ENCODE measurements at regions of chr18 and their contacts with region 1.

Region 1: GRCh38 chr18:58043491-58044379 is at the start of gene NEDD4L:
- DNase-seq: peak; percentile 83
- H3K4me3 Mint-ChIP-seq: peak within 1 kb of the TSS; percentile 88
- H3K27ac Mint-ChIP-seq: peak within 1 kb of the TSS; percentile 80
- H3K4me1 Mint-ChIP-seq: peaks cover 19% of the 10 kb centered on the region
- H3K27me3 Mint-ChIP-seq: no peaks in the 10 kb centered on the region
- CTCF ChIP-seq: peak; percentile 83
- total RNA-seq, gene NEDD4L: 75.1 and 108 TPM in 2 replicates

Region 2: DNA sequence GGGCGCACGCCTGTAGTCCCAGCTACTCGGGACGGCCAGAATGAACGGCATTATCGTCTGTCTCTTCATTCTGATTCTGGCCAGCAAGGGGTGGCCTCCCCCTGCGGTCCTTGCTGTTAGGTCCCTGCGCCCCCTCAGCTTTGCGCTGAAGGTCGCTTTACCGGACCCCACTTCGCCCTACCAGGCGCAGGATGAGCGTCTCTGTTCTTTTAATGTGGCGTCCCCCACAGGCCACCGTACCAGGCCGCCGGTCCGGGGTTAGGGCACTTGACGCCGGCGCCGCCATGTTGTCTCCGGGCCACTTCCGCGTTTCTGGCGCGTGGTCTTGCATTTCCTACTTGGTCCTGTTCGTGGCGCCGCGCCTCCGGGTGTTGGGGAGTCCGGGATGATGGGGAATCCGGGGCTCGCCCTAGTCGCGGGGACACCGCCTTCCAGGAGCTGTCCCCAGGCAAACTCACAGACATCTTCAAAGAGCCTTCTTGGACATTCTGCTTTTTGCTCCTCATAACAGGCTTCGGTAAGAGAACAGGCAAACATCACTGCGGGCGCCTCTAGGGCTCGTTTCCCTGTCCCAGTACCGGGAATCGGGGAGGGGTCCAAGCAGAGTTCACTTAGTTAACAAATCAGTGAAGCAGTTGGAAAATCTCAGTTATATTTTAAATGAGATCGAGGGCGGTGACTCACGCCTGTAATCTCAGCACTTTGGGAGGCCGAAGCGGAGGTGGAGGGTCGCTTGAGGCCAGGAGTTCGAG is 413.6 kb before region 1 on chr18:
- CTCF ChIA-PET with region 1: interaction called, 4 read pairs
- POLR2A ChIA-PET with region 1: interaction called, 3 read pairs
- intact Hi-C with region 1: loop called (anchors 1 kb)
- DNase-seq: peak; percentile 97
- H3K4me3 Mint-ChIP-seq: peak overlapping the region; percentile 84
- H3K27ac Mint-ChIP-seq: peak overlapping the region; percentile 97
- H3K4me1 Mint-ChIP-seq: peaks cover 6% of the 10 kb centered on the region
- H3K27me3 Mint-ChIP-seq: no peaks in the 10 kb centered on the region
- CTCF ChIP-seq: peak; percentile 76

Region 3: DNA sequence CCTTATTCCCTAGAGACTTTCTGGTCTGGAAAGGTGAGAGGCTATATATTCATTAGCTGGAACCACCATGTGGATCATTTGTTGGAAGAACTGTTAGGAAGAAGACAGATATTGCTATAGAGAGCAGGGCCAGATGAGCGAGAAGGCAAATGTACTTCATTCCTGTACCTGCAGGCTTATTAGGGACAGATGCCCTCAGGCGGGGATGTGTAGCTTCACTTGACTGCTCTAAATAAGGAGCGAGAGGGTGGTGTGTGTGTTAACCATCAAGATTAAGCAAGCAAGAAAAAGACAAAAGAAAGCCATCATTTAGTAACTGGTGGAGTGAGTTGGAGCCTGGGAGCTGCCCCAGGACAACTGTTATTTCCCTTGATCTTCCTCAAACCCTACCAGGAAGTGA is 36.7 kb after region 1 on chr18:
- CTCF ChIA-PET with region 1: interaction called, 8 read pairs
- POLR2A ChIA-PET with region 1: interaction called, 44 read pairs
- intact Hi-C with region 1: no loop called
- DNase-seq: peak; percentile 18
- H3K4me3 Mint-ChIP-seq: no peak overlapping the region
- H3K27ac Mint-ChIP-seq: peak overlapping the region; percentile 57
- H3K4me1 Mint-ChIP-seq: peaks cover 30% of the 10 kb centered on the region
- H3K27me3 Mint-ChIP-seq: no peaks in the 10 kb centered on the region
- CTCF ChIP-seq: no peak

Region 4: GRCh38 chr18:58135701-58136331 is 92.1 kb after region 1 on chr18:
- CTCF ChIA-PET with region 1: interaction called, 7 read pairs
- POLR2A ChIA-PET with region 1: no interaction called
- intact Hi-C with region 1: loop called (anchors 5 kb)
- DNase-seq: peak; percentile 85
- H3K4me3 Mint-ChIP-seq: no peak overlapping the region
- H3K27ac Mint-ChIP-seq: no peak overlapping the region
- H3K4me1 Mint-ChIP-seq: peaks cover 3% of the 10 kb centered on the region
- H3K27me3 Mint-ChIP-seq: no peaks in the 10 kb centered on the region
- CTCF ChIP-seq: peak; percentile 64

Region 5: GRCh38 chr18:58314284-58314683 is 270.5 kb after region 1 on chr18:
- CTCF ChIA-PET with region 1: interaction called, 6 read pairs
- POLR2A ChIA-PET with region 1: interaction called, 10 read pairs
- intact Hi-C with region 1: no loop called
- DNase-seq: peak; percentile 95
- H3K4me3 Mint-ChIP-seq: no peak overlapping the region
- H3K27ac Mint-ChIP-seq: peak overlapping the region; percentile 83
- H3K4me1 Mint-ChIP-seq: peaks cover 49% of the 10 kb centered on the region
- H3K27me3 Mint-ChIP-seq: no peaks in the 10 kb centered on the region
- CTCF ChIP-seq: no peak

Region 6: DNA sequence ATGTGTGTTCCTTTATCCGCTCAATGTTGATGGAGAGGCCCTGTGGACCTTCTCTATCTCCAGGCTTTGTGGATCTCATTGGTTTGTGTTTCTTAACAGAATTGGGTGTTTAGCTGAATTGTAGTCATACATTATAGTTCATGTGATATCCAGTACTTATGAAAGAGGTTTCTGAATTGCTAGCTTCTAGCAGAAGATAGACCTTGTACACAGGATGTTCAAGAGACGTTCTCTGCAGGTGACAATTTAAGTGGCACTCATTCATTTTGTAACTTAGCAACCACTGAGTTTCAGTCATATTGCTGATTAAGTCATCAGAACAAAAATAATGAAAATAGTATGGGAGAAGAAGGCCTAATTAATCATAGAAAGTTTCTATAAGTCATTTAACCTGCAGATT is 305.9 kb after region 1 on chr18:
- CTCF ChIA-PET with region 1: no interaction called
- POLR2A ChIA-PET with region 1: no interaction called
- intact Hi-C with region 1: no loop called
- DNase-seq: no peak
- H3K4me3 Mint-ChIP-seq: no peak overlapping the region
- H3K27ac Mint-ChIP-seq: no peak overlapping the region
- H3K4me1 Mint-ChIP-seq: no peaks in the 10 kb centered on the region
- H3K27me3 Mint-ChIP-seq: no peaks in the 10 kb centered on the region
- CTCF ChIP-seq: no peak

Measured in MCF 10A (cell line).